Dorsolateral prefrontal cortex (tissue), 120 donors: ENCODE measurements at regions of chr15 and their contacts with region 1.

Region 1: DNA sequence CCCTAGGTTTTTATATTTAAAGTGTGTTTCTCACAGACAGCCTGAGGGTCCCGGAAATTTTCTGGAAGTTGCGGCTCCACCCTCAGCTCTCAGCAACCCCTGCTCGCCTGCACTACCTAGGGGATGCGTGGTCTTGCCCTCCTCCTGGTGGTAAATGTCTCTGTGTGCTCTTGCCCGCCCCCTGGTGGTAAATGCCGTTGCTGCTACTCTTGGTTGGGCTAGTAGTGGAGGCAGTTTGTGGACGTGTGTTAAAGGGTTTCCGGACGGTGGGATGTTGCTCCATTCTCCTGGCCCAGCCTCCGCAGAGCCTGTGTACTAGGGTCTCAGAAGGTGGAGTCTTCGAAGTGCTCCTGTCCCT is 27.4 kb downstream of the STOML1 start:
- DNase-seq: peak in 8 of 10 donors; percentile 35 to 75 (median 68)
- H3K4me3 ChIP-seq: no peak overlapping the region
- H3K27ac ChIP-seq: no peak overlapping the region
- H3K27me3 ChIP-seq: peaks cover 0 to 6% (median 0%) of the 10 kb centered on the region in 45 donors
- CTCF ChIP-seq: peak; percentile 45 to 93 (median 85)

Region 2: DNA sequence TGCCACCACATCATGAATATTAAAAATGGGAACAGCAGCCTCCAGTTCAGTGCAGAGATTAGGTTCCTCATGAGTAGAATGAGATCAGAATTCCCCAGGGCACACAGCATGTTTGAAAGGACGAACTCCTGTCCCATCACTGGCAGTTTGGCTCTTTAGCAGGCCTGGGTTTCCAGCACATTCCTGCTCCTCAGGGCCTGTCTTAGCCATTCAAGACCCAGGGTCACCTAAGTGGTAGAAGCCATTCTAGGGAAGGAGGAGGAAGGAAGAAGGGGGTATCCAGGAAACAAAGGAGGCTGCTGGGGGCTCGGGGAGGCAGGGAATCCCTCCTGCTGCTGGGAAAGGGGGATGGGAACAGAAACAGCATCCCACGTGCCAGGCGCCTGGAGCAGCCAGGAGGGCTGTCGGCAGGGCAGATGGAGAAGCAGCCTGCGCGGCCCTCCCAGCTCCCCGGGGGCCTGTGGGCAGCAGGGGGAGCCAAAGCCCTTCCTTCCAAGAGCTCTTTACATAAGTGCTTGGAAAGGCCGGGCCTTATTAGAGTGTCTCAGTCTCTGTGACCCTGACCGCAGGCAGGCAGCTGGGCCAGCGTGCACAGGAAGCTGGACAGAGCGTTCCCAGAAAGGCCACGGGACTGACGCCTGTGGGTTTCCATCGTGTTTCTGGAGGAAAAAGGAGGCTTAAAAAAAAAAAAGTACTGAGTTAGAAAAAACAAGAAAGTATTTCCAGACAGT is 13.7 kb before region 1 on chr15:
- intact Hi-C with region 1: loop called (anchors 2 kb)
- DNase-seq: peak; percentile 68 to 84 (median 80)
- H3K4me3 ChIP-seq: no peak overlapping the region
- H3K27ac ChIP-seq: peak overlapping the region in 56 of 59 donors; percentile 39 to 97 (median 86)
- H3K27me3 ChIP-seq: no peaks in the 10 kb centered on the region
- CTCF ChIP-seq: peak; percentile 56 to 92 (median 80)

Region 3: DNA sequence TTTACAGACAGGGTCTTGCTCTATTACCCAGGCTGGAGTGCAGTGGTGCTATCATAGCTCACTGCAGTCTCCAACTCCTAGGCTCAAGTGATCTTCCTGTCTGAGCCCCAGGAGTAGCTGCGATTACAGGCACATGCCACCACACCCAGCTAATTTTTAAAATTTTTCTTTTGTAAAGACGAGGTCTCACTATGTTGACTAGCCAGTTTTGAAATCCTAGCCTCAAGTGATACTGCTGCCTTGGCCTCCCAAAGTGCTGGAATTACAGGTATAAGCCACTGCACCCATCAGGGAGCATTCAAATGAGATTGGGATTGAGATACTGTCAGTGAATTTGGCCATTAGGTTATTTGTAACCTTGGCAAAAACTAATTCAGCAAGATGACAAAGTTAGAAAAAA is 709.4 kb after region 1 on chr15:
- intact Hi-C with region 1: no loop called
- DNase-seq: no peak
- H3K4me3 ChIP-seq: no peak overlapping the region
- H3K27ac ChIP-seq: no peak overlapping the region
- H3K27me3 ChIP-seq: no peaks in the 10 kb centered on the region
- CTCF ChIP-seq: no peak